ENCODE measurements at regions of chrX and their contacts with region 1.

Region 1: DNA sequence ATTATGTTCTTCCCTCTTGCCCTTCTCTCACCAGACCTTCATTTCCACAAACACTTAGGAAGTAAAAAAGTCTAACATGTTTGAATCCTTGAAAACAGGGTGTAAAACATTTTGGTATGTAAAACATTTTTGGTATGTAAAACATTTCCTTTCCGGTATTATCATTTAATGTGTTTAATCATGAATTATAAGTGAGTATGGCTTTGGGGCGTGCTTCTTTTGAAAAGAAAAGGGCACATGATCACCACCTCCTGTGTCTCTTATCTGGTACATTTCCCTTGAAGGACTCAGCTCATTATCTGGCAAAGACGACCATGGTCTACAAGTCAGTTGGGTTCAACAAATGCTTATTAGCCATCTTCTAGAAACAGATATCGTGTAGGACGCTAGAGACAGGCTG is 283.6 kb downstream of the FRMPD4 start:
- DNase-seq: no peak
- ATAC-seq: no peak
- H3K4me3 ChIP-seq: no peak overlapping the region
- H3K27ac ChIP-seq: no peak overlapping the region
- H3K4me1 ChIP-seq: no peaks in the 10 kb centered on the region
- H3K27me3 ChIP-seq: no peaks in the 10 kb centered on the region
- CTCF ChIP-seq: no peak

Region 2: DNA sequence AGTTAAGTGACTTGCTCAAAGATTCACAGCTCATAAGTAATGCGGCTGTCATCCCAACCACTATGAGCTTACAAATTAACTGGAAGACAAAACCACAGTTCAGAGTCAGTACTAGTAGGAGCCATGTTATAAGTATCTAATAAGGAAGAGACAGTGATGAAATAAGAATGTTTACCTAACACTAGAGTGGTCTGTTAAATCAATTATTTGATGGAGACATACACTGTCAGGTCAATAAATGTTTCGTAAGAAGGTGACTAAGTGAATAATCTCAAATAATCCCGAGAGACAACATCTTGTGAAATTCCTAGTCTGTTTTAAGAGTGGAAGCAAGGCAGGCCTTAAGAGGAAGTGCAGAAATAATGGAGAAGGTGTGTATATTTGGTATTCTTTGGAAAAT is 1154.5 kb before region 1 on chrX:
- intact Hi-C with region 1: no loop called
- DNase-seq: no peak
- ATAC-seq: no peak
- H3K4me3 ChIP-seq: no peak overlapping the region
- H3K27ac ChIP-seq: peak overlapping the region in 2 of 10 donors; percentile 47 to 48
- H3K4me1 ChIP-seq: peaks cover 0 to 13% (median 3%) of the 10 kb centered on the region in 9 donors
- H3K27me3 ChIP-seq: peaks cover 0 to 2% (median 0%) of the 10 kb centered on the region in 7 donors
- CTCF ChIP-seq: no peak

Region 3: GRCh38 chrX:12469296-12469695 is 47.4 kb after region 1 on chrX:
- intact Hi-C with region 1: loop called in 1 of 10 experiments (anchors 2 kb)
- DNase-seq: no peak
- ATAC-seq: no peak
- H3K4me3 ChIP-seq: no peak overlapping the region
- H3K27ac ChIP-seq: no peak overlapping the region
- H3K4me1 ChIP-seq: no peaks in the 10 kb centered on the region
- H3K27me3 ChIP-seq: peaks cover 0 to 7% (median 0%) of the 10 kb centered on the region in 7 donors
- CTCF ChIP-seq: no peak

Region 4: DNA sequence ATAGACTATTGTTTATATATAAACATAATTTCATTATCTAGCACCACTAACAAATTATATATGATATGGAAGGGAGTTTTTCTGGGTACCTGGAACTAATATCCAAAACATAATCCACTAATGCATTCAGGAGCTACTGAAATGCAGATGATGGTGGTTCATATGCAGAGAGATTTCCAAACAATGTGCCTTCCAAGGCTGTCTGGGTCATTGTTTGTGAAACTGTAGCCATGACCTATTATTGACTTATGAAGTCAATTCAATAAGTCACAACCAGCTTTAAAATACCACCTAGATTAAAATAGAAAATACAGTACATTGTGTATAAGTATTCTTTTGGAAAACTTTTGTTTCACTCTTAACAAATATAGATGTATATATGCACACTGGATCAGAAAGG is 132.3 kb after region 1 on chrX:
- intact Hi-C with region 1: no loop called
- DNase-seq: no peak
- ATAC-seq: no peak
- H3K4me3 ChIP-seq: no peak overlapping the region
- H3K27ac ChIP-seq: no peak overlapping the region
- H3K4me1 ChIP-seq: no peaks in the 10 kb centered on the region
- H3K27me3 ChIP-seq: peaks cover 0 to 3% (median 0%) of the 10 kb centered on the region in 7 donors
- CTCF ChIP-seq: no peak